Activated CD4-positive, alpha-beta T cell treated with anti-CD3 and anti-CD28 coated beads, Interleukin-2, amount 10 ng/mL, durations not matched to agents 24 days and 14 days (primary cell): ENCODE measurements at regions of chr3 and their contacts with region 1.

Region 1: DNA sequence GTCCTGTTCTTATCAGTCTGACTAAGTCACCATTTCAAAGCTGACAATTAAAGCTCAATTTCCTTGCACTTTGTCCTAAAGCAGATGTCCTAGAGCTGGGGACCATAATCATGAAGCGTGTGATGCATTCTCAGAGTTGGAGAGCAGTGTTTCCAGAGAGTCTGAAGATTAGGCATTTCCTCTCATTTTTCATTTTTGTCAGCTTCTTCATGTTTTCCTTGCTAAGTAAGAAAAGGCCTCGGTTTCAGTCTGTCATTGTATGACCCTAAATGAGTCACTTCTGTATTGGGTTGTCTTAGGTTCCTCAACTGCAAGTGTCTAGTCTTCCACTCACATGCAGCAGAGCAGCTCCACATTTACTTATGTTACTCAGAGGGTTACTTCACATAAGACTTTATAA is 257.2 kb upstream of the TPRG1 start:
- DNase-seq: no peak
- H3K4me3 Mint-ChIP-seq: peak overlapping the region; percentile 23
- H3K27ac Mint-ChIP-seq: peak overlapping the region; percentile 87
- H3K4me1 Mint-ChIP-seq: peaks cover 37% of the 10 kb centered on the region
- H3K27me3 Mint-ChIP-seq: no peaks in the 10 kb centered on the region

Region 2: DNA sequence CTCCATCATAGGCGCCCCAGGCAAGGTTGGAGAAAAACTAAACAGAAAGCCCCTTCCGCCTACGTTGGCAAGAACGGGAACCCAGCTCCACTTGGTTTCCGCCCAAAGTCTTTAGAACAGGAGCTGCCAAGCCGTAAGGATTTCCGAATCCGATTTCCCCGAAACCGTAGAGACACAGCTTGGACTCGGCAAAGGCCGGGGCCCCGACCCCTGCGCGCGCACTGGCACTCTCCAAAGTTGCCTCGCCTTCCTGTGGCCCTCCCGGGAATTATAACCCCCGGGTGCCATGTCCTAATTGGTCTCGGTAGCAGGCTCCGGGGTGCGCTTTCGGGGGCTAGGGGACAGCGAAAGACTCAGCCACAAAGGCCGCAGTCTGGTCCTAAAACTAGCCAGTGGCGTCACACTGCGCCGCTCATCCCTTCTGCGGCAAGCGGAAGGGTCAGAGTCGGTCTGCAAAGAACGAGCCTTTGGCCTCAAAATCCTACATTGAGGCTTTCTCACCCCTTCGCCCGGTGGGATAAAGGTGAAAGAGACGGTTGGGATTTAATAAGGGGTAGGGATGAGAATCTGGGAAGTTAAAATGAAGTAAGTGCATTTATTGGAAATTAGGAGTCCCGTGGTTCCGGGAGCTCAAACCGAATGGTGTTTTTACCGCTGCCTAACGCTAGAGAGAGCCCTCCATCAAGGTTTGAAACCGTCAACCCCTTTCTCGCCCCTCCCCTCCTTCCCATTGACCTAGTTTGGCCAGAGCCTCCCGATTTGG is 1176.0 kb before region 1 on chr3:
- intact Hi-C with region 1: loop called (anchors 1 kb)
- DNase-seq: peak; percentile 92
- H3K4me3 Mint-ChIP-seq: peak overlapping the region; percentile 98
- H3K27ac Mint-ChIP-seq: peak overlapping the region; percentile 99
- H3K4me1 Mint-ChIP-seq: peaks cover 51% of the 10 kb centered on the region
- H3K27me3 Mint-ChIP-seq: no peaks in the 10 kb centered on the region

Region 3: GRCh38 chr3:188061133-188061532 is 853.4 kb before region 1 on chr3:
- intact Hi-C with region 1: loop called (anchors 10 kb)
- DNase-seq: peak; percentile 85
- H3K4me3 Mint-ChIP-seq: peak overlapping the region; percentile 66
- H3K27ac Mint-ChIP-seq: peak overlapping the region; percentile 88
- H3K4me1 Mint-ChIP-seq: peaks cover 32% of the 10 kb centered on the region
- H3K27me3 Mint-ChIP-seq: no peaks in the 10 kb centered on the region

Region 4: GRCh38 chr3:188320757-188321156 is 593.8 kb before region 1 on chr3:
- intact Hi-C with region 1: loop called (anchors 5 kb)
- DNase-seq: no peak
- H3K4me3 Mint-ChIP-seq: no peak overlapping the region
- H3K27ac Mint-ChIP-seq: peak overlapping the region; percentile 29
- H3K4me1 Mint-ChIP-seq: peaks cover 48% of the 10 kb centered on the region
- H3K27me3 Mint-ChIP-seq: peaks cover 4% of the 10 kb centered on the region

Region 5: GRCh38 chr3:188683032-188683521 is 231.5 kb before region 1 on chr3:
- intact Hi-C with region 1: loop called (anchors 1 kb)
- DNase-seq: no peak
- H3K4me3 Mint-ChIP-seq: no peak overlapping the region
- H3K27ac Mint-ChIP-seq: peak overlapping the region; percentile 47
- H3K4me1 Mint-ChIP-seq: peaks cover 28% of the 10 kb centered on the region
- H3K27me3 Mint-ChIP-seq: no peaks in the 10 kb centered on the region

Region 6: DNA sequence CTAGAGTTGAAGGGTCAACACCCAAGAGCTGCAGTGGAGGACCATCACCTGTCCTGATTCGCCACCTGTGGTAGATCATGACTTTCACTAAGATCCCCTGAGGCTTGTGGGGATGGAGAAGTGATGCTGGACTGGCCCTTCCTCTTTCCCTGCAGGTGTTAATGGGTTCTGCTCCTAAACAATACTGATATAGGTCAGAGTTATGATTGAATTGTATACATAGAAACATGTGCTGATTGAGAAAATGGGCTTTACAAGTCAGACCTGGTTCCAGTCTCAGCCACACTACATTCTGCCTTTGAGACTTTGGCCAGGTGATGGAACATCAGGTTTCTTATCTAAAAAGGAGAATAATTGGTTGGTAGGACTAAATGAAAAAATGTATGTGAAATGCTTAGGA is 161.7 kb before region 1 on chr3:
- intact Hi-C with region 1: loop called (anchors 1 kb)
- DNase-seq: no peak
- H3K4me3 Mint-ChIP-seq: no peak overlapping the region
- H3K27ac Mint-ChIP-seq: peak overlapping the region; percentile 2
- H3K4me1 Mint-ChIP-seq: peaks cover 21% of the 10 kb centered on the region
- H3K27me3 Mint-ChIP-seq: peaks cover 2% of the 10 kb centered on the region

Region 7: GRCh38 chr3:189041482-189042090 is 127.0 kb after region 1 on chr3:
- intact Hi-C with region 1: loop called (anchors 1 kb)
- DNase-seq: peak; percentile 94
- H3K4me3 Mint-ChIP-seq: peak overlapping the region; percentile 48
- H3K27ac Mint-ChIP-seq: peak overlapping the region; percentile 79
- H3K4me1 Mint-ChIP-seq: peaks cover 54% of the 10 kb centered on the region
- H3K27me3 Mint-ChIP-seq: no peaks in the 10 kb centered on the region